ENCODE measurements at regions of chr14 and their contacts with region 1.

Region 1: DNA sequence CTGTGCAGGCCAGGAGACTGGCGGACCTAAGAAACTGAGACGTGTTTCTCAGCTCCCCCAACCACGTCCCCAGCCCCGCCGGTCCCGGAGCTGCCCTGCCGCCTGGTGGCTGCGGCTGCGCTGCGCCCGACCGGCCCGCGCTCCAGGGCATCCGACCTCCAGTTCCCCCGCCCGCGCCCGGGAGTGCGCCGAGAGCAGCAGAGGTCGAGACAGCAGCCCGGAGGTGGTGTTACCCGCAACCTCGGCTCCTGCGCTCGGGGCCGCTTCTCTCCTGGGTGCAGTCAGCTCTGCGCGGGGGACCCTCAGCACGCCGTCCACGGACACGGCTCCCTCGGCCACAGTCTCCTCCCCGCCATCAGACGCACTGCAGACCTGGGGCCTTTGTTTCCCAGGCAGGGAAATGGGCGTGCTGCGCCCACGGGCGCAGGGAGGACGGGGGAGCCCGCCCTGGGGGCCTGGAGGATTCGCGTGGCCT is 21.6 kb upstream of the GPR132 start:
- DNase-seq: no peak
- H3K4me3 ChIP-seq: peak overlapping the region; percentile 67
- CTCF ChIP-seq: peak; percentile 82

Region 2: DNA sequence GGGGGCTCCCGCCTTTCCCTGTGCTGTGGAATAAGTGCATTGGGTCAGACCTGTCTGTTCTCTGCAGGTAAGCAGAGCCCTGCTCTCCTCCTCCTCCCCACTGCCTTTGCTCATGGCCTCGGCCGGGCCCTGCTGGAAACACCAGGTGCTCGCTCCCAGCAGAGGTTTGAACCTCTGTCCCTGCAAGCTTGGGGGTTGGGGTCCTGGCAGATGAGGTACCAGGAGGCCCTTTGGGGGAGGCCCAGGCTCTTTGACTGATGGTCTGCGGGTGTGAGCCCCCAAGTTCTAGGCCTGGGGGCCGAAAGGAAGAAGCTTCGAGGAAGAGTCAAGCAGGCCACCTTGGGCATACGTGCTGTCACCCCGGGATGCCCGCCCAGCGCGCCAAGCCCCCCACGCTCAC is 243.9 kb before region 1 on chr14:
- CTCF ChIA-PET with region 1: no interaction called
- POLR2A ChIA-PET with region 1: no interaction called
- DNase-seq: no peak
- H3K4me3 ChIP-seq: no peak overlapping the region
- CTCF ChIP-seq: no peak

Region 3: DNA sequence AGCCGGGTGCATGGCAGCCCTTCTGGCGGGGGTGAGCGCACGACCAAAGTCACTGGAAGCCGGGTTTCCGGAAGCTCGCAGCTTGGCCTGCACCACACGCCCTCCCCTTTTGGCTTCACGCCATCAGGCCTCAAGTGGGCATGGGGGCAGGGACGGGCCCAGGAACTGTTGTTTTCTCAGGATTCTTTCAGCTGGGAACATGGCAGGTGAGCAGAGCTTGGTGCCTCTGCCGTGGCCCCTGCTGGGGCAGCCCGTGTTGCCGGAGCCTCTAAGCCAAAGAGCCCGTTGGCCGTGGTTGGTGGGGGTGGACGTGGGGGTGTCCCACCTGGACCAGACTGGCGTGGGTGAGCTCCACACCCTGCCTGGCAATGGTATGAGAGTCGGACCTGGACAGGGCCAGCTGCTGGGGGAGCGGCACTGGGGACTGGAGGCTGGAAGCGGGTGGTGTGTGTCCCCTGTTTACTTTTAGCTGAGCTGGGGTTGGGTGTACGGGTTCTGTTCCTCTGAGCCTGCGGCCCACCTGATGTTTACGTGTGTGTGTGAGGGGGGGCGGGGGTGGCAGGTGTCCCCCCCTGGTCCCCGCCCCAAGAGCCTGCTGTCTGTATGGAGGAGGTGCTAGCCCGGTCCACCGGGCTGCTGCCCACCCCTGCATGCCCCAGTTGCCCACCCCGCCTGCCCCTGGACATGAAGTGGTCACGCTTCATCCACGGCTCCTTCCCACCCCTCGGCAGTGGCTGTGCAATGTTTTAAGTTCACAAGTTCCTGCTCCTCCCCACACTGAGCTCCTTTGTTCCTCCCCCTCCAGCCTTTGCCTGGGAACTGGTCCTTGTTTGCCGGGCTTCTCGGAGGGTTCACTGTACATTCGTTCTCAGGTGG is 190.8 kb before region 1 on chr14:
- CTCF ChIA-PET with region 1: interaction called, 17 read pairs
- POLR2A ChIA-PET with region 1: interaction called, 3 read pairs
- DNase-seq: no peak
- H3K4me3 ChIP-seq: no peak overlapping the region
- CTCF ChIP-seq: no peak

Region 4: GRCh38 chr14:105069871-105070759 is 16.8 kb before region 1 on chr14:
- CTCF ChIA-PET with region 1: interaction called, 11 read pairs
- POLR2A ChIA-PET with region 1: interaction called, 8 read pairs
- DNase-seq: no peak
- H3K4me3 ChIP-seq: no peak overlapping the region
- CTCF ChIP-seq: no peak

Region 5: DNA sequence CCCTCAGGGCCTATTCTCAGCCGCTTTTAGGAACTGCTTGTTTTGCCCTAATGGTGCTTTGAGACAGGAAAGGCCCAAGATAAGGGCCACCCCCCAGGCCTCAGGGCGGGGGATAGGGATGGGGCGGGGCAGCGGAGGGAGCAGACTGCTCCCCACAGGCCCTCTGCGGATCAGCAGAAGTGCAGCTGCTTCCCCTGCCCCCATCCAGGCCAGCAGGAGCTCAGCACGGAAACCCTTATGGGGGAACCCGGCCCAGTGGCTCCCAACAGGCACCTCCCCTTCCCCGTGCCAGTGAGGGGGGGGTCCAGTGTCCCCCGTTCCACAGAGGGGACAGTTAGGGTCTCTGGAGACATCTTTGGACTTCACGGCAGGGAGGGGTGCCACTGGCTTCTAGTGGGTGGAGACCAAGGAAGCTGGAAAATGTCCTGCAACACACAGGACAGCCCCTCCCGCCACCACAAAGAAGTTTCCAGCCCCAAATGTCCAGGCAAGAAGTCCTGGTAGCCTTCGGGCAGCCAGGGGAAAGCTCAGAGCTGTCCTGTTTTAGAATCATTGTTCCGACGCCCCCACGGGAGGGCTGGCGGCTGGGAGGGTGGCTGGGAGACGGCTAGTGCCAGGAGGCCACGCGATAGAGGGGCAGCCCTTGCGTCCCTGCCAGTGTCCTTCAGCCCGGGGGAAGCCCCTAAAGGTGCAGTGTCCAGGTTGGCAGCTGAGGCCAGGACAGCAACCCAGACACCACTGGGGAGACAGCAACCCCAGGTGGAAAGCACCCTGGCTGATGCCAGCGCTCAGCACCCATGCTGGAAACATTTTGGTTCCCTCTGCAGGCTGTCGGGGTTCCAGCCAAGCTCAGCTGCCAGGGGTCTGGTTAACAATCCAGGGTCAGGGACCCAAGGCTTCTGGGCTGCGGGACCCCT is 11.2 kb before region 1 on chr14:
- CTCF ChIA-PET with region 1: interaction called, 11 read pairs
- POLR2A ChIA-PET with region 1: interaction called, 8 read pairs
- DNase-seq: no peak
- H3K4me3 ChIP-seq: no peak overlapping the region
- CTCF ChIP-seq: no peak

Region 6: GRCh38 chr14:105102893-105103292 is 16.0 kb after region 1 on chr14:
- CTCF ChIA-PET with region 1: interaction called, 23 read pairs
- POLR2A ChIA-PET with region 1: no interaction called
- DNase-seq: no peak
- H3K4me3 ChIP-seq: no peak overlapping the region
- CTCF ChIP-seq: no peak

Region 7: GRCh38 chr14:105228562-105228961 is 141.7 kb after region 1 on chr14:
- CTCF ChIA-PET with region 1: no interaction called
- POLR2A ChIA-PET with region 1: no interaction called
- DNase-seq: no peak
- H3K4me3 ChIP-seq: no peak overlapping the region
- CTCF ChIP-seq: no peak

Region 8: GRCh38 chr14:105281371-105282097 is 194.7 kb after region 1 on chr14:
- CTCF ChIA-PET with region 1: interaction called, 14 read pairs
- POLR2A ChIA-PET with region 1: no interaction called
- DNase-seq: peak; percentile 23
- H3K4me3 ChIP-seq: no peak overlapping the region
- CTCF ChIP-seq: peak; percentile 58

Region 9: GRCh38 chr14:105351920-105352851 is 265.3 kb after region 1 on chr14:
- CTCF ChIA-PET with region 1: interaction called, 11 read pairs
- POLR2A ChIA-PET with region 1: no interaction called
- DNase-seq: peak; percentile 40
- H3K4me3 ChIP-seq: no peak overlapping the region
- CTCF ChIP-seq: peak; percentile 88

Measured in AG04449 (cell line).